ENCODE measurements at regions of chr7 and their contacts with region 1.

Region 1: GRCh38 chr7:77439572-77439971 is 23.4 kb upstream of the GSAP start:
- DNase-seq: peak; percentile 41
- H3K4me3 ChIP-seq: no peak overlapping the region
- H3K27ac ChIP-seq: no peak overlapping the region
- H3K4me1 ChIP-seq: peaks cover 11% of the 10 kb centered on the region
- H3K27me3 ChIP-seq: no peaks in the 10 kb centered on the region
- CTCF ChIP-seq: peak; percentile 19 to 24
- POLR2A ChIP-seq: no peak

Region 2: GRCh38 chr7:77425101-77426051 is 14.2 kb before region 1 on chr7:
- CTCF ChIA-PET with region 1: interaction called, 10 read pairs
- POLR2A ChIA-PET with region 1: no interaction called
- dilution Hi-C with region 1: no loop called
- intact Hi-C with region 1: no loop called
- DNase-seq: no peak
- H3K4me3 ChIP-seq: no peak overlapping the region
- H3K27ac ChIP-seq: no peak overlapping the region
- H3K4me1 ChIP-seq: peaks cover 21% of the 10 kb centered on the region
- H3K27me3 ChIP-seq: no peaks in the 10 kb centered on the region
- CTCF ChIP-seq: no peak
- POLR2A ChIP-seq: no peak

Region 3: GRCh38 chr7:77759294-77759889 is 319.8 kb after region 1 on chr7:
- CTCF ChIA-PET with region 1: no interaction called
- POLR2A ChIA-PET with region 1: no interaction called
- dilution Hi-C with region 1: no loop called
- intact Hi-C with region 1: loop called (anchors 2 kb)
- DNase-seq: peak; percentile 82
- H3K4me3 ChIP-seq: no peak overlapping the region
- H3K27ac ChIP-seq: no peak overlapping the region
- H3K4me1 ChIP-seq: no peaks in the 10 kb centered on the region
- H3K27me3 ChIP-seq: no peaks in the 10 kb centered on the region
- CTCF ChIP-seq: peak; percentile 55 to 66
- POLR2A ChIP-seq: no peak

Measured in endothelial cell of umbilical vein (primary cell).